ENCODE measurements at regions of chr16 and their contacts with region 1.

Region 1: GRCh38 chr16:81696961-81697615 is 82.0 kb upstream of the PLCG2 start:
- DNase-seq: no peak
- ATAC-seq: no peak

Region 2: GRCh38 chr16:81403616-81404373 is 293.3 kb before region 1 on chr16:
- intact Hi-C with region 1: loop called (anchors 5 kb)
- DNase-seq: peak; percentile 95
- ATAC-seq: peak; percentile 86

Region 3: GRCh38 chr16:81623363-81624102 is 73.6 kb before region 1 on chr16:
- intact Hi-C with region 1: loop called (anchors 2 kb)
- DNase-seq: no peak
- ATAC-seq: no peak

Measured in Right ventricle myocardium inferior (tissue), 1 donor.